Transverse colon (tissue), 4 donors: ENCODE measurements at regions of chr16 and their contacts with region 1.

Region 1: DNA sequence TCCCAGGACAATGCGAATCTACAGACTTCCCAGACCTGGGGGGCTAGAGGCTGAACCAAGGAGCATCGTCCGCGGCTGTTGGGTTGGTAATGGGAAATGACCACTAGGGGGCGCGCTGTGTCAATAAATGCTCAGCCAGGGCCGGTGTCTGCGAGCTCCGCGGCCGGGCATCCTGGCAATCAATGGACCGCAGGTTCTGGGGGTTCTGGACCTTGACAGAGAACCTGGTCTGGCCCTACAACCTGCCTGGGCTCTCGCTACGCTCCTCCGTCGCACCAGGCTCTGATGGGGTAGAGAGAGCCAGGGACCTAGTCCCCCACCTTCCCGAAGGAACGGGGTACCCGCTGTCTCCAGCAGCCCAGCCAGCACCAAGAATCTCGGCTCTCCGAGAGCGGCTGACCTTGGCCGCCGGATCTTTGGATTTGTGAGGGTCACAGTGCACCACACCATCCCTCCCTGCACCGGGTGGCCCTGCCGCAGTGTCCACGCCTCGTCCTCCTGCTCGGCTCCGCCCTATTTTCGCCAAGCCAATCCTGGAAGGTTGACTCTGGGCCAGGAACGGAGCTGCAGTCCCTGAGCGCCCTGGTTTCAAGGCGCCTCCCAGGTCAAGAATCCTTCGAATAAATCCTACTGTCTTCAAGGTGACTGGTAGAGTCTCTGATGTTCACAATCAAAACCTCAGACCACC is 20.4 kb upstream of the BEAN1 start:
- DNase-seq: peak; percentile 87
- H3K4me3 ChIP-seq: peak overlapping the region; percentile 20 to 57 (median 38)
- H3K27ac ChIP-seq: peak overlapping the region in 1 of 4 donors; percentile 56
- H3K4me1 ChIP-seq: peaks cover 3 to 22% (median 7%) of the 10 kb centered on the region in 4 donors
- H3K27me3 ChIP-seq: peaks cover 9% of the 10 kb centered on the region
- CTCF ChIP-seq: peak; percentile 85 to 91 (median 88)
- EP300 ChIP-seq: no peak
- POLR2A ChIP-seq: no peak

Region 2: GRCh38 chr16:66483689-66484481 is 77.2 kb after region 1 on chr16:
- in situ Hi-C with region 1: loop called in 2 of 4 experiments (anchors 5 to 10 kb)
- intact Hi-C with region 1: loop called (anchors 5 kb)
- DNase-seq: peak; percentile 78
- H3K4me3 ChIP-seq: no peak overlapping the region
- H3K27ac ChIP-seq: no peak overlapping the region
- H3K4me1 ChIP-seq: peaks cover 0 to 11% (median 8%) of the 10 kb centered on the region in 4 donors
- H3K27me3 ChIP-seq: no peaks in the 10 kb centered on the region
- CTCF ChIP-seq: peak; percentile 86 to 94 (median 92)
- EP300 ChIP-seq: no peak
- POLR2A ChIP-seq: no peak

Region 3: DNA sequence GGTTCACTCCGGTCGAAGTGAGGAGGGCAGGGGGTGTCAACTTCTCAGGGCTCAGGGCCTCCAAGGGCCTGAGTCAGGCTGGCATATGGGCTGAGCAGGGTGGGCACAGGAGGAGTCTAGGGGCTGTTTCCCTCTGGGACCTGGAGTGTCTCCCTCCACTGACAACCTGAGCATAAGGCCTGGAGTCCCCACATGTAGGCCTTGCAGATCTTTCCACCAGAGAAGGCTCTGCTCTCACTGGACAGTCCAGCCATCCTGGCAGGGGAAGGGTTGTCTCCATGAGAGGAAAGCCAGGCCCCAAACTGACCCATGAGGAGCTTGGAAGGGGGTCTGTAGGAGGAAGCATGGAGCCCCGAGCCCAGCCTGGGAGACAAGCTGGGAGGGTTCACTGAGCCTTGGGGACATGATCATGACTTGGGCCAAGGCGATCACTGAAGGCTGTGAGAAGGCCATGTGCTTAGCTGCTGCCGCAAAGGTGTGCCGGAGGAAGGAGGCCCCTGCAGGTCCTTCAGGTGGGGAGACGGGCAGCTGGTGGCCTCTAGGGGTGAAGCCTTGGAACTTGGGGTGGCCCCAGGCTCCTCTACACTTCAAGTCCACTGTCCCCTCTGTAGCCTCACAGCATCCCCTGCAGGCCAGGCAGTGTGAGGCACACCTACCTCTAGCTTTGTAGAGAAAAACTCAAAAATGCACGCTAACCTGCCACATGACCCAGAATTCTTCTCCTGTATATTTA is 182.5 kb after region 1 on chr16:
- in situ Hi-C with region 1: loop called in 3 of 4 experiments (anchors 10 to 25 kb)
- intact Hi-C with region 1: no loop called
- DNase-seq: peak; percentile 56
- H3K4me3 ChIP-seq: no peak overlapping the region
- H3K27ac ChIP-seq: no peak overlapping the region
- H3K4me1 ChIP-seq: no peaks in the 10 kb centered on the region
- H3K27me3 ChIP-seq: no peaks in the 10 kb centered on the region
- CTCF ChIP-seq: peak; percentile 35 to 56 (median 45)
- EP300 ChIP-seq: no peak
- POLR2A ChIP-seq: no peak

Region 4: DNA sequence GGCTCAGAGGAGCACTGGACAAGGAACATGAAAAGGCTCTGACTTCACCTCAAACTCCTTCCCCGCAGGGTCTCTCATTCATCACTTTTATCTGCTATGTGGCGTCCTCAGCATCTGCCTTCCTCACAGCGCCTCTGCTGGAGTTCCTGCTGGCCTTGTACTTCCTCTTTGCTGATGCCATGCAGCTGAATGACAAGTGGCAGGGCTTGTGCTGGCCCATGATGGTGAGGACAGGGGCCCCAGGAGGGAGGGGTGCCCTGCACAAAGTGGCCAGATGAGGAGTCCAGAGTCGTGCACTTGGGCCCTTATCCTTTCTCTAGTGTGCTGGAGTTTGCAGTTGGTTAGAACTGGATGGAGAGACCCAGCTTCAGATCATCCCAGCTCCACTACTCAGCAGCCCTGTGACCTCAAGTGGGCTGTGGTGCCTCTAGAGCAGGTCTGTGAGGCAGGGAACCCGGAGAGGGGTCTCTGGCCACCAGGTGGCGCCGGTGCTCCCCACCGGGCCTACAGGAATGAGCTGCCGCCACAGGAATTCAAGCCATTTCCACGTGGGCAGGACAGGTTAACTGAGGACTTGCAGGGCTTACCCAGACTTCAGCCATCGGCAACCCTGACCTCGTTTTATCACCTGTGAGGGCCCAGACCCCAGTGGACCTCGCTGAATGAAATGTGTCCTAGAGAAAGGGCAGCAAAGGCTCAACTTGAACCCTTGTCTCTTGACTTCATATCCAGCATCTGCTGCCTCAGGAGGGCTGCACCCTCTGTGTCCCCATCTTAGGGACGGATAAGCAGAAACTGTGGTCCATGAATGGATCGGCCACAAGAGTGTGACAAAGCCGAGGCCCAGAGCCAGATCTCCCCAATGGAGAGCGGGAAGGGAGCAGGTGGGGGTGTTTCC is 201.8 kb after region 1 on chr16:
- in situ Hi-C with region 1: loop called in 2 of 4 experiments (anchors 10 to 25 kb)
- intact Hi-C with region 1: loop called (anchors 10 kb)
- DNase-seq: peak; percentile 86
- H3K4me3 ChIP-seq: no peak overlapping the region
- H3K27ac ChIP-seq: peak overlapping the region in 1 of 4 donors; percentile 1
- H3K4me1 ChIP-seq: peaks cover 0 to 39% (median 22%) of the 10 kb centered on the region in 4 donors
- H3K27me3 ChIP-seq: peaks cover 17% of the 10 kb centered on the region
- CTCF ChIP-seq: peak; percentile 78 to 91 (median 86)
- EP300 ChIP-seq: no peak
- POLR2A ChIP-seq: no peak

Region 5: DNA sequence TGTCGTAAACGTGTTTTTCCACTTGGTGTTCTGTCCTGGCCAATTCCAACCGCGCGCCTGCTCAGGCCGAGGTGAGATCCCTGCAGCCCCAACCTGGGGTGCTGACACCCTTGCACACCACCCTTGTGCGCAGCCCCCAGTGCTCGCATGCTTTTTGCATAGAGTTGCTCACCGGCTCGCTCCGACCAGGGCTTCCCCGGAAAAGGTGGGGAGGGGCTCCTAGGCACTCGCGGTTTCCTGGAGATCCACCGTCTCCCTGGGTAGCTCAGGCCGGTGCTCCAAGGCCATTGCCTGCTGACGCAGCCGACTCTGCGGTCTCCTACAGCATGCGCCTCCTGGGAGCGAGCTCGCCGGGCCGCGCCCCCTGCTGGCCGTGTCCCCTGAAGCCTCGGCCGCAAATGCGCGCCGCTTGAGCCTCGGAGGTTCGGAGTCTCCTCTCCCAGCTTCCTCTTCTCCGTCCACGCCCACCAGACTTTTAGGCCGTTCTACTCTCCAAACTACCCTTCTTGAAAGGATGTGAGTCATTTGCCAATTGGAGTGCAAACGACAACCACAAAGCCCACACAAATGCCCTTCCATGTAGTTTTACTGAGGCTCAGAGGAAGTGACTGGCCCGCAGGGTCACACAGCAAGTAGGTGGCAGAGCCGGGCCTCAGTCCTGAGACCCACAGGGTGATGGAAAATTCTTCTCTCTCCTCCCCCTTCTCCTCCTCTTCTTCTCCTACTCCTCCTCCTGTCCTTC is 466.4 kb after region 1 on chr16:
- in situ Hi-C with region 1: loop called (anchors 25 kb)
- intact Hi-C with region 1: no loop called
- DNase-seq: peak; percentile 94
- H3K4me3 ChIP-seq: peak overlapping the region in 3 of 4 donors; percentile 19 to 43 (median 28)
- H3K27ac ChIP-seq: peak overlapping the region; percentile 84 to 86 (median 85)
- H3K4me1 ChIP-seq: peaks cover 7 to 36% (median 26%) of the 10 kb centered on the region in 4 donors
- H3K27me3 ChIP-seq: no peaks in the 10 kb centered on the region
- CTCF ChIP-seq: peak; percentile 84 to 95 (median 93)
- EP300 ChIP-seq: no peak
- POLR2A ChIP-seq: peak; percentile 11